ENCODE measurements at regions of chr6 and their contacts with region 1.

Region 1: GRCh38 chr6:15691250-15691869 is 28.5 kb upstream of the DTNBP1 start:
- DNase-seq: peak; percentile 90
- H3K4me3 ChIP-seq: peak overlapping the region in 1 of 2 experiments; percentile 22; a peak in 1 of 4 replicates
- H3K27ac ChIP-seq: no peak overlapping the region
- H3K4me1 ChIP-seq: no peaks in the 10 kb centered on the region; a peak in 1 of 4 replicates
- H3K27me3 ChIP-seq: no peaks in the 10 kb centered on the region
- CTCF ChIP-seq: peak; percentile 99
- EP300 ChIP-seq: peak in 1 of 2 experiments; percentile 21; a peak in 1 of 4 replicates
- RAD21 ChIP-seq: peak; percentile 100

Region 2: DNA sequence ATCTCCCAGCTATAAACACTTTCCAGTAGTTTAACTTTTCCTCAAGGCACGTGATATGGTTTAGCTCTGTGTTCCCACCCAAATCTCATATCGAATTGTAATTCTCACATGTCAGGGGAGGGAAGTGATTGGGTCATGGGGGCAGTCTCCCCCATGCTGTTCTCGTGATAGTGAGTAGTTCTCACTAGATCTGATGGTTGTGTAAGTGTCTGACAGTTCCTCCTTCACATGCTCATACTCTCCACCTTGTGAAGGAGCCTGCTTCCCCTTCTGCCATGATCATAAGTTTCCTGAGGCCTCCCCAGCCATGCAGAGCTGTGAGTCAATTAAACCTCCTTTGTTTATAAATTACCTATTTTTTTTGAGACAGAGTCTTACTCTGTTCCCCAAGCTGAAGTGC is 156.4 kb before region 1 on chr6:
- CTCF ChIA-PET with region 1: no interaction called
- POLR2A ChIA-PET with region 1: no interaction called
- DNase-seq: no peak
- H3K4me3 ChIP-seq: no peak overlapping the region
- H3K27ac ChIP-seq: no peak overlapping the region
- H3K4me1 ChIP-seq: no peaks in the 10 kb centered on the region; a peak in 1 of 4 replicates
- H3K27me3 ChIP-seq: no peaks in the 10 kb centered on the region
- CTCF ChIP-seq: no peak
- EP300 ChIP-seq: no peak
- RAD21 ChIP-seq: no peak

Region 3: DNA sequence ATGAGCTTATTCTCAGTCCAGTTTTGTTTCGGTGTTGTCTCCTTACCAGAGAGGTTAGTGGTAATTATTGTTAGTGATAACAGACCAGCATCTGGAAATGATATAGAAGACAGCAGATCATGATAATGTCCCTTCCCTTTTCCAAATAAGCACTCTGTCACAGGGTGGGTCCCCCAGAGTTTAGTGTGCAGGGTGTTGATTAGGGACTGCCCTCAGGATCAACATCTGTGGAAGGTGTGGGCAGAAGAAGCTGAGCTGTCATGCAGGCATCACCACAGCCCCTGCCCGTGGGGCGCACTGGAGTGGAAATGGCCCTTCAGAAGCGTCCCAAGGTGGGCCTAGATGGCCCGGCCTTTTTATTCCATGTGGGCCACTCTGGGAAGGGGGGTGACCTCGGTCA is 39.1 kb after region 1 on chr6:
- CTCF ChIA-PET with region 1: interaction called, 11 read pairs
- POLR2A ChIA-PET with region 1: no interaction called
- DNase-seq: peak; percentile 57
- H3K4me3 ChIP-seq: no peak overlapping the region; a peak in 1 of 4 replicates
- H3K27ac ChIP-seq: peak overlapping the region in 1 of 2 experiments; percentile 44; a peak in 2 of 4 replicates
- H3K4me1 ChIP-seq: peaks cover 0 to 13% of the 10 kb centered on the region in 2 experiments; a peak in 2 of 4 replicates
- H3K27me3 ChIP-seq: no peaks in the 10 kb centered on the region
- CTCF ChIP-seq: no peak
- EP300 ChIP-seq: peak in 1 of 2 experiments; percentile 79; a peak in 1 of 4 replicates
- RAD21 ChIP-seq: no peak

Region 4: GRCh38 chr6:15879382-15880261 is 188.3 kb after region 1 on chr6:
- CTCF ChIA-PET with region 1: interaction called, 12 read pairs
- POLR2A ChIA-PET with region 1: no interaction called
- DNase-seq: peak; percentile 76
- H3K4me3 ChIP-seq: no peak overlapping the region
- H3K27ac ChIP-seq: peak overlapping the region in 1 of 2 experiments; percentile 84; a peak in 2 of 4 replicates
- H3K4me1 ChIP-seq: peaks cover 4 to 33% of the 10 kb centered on the region in 2 experiments; a peak in 3 of 4 replicates
- H3K27me3 ChIP-seq: no peaks in the 10 kb centered on the region
- CTCF ChIP-seq: no peak
- EP300 ChIP-seq: peak in 1 of 2 experiments; percentile 96; a peak in 2 of 4 replicates
- RAD21 ChIP-seq: peak; percentile 28; the same call in 1 of the 2 replicates

Region 5: DNA sequence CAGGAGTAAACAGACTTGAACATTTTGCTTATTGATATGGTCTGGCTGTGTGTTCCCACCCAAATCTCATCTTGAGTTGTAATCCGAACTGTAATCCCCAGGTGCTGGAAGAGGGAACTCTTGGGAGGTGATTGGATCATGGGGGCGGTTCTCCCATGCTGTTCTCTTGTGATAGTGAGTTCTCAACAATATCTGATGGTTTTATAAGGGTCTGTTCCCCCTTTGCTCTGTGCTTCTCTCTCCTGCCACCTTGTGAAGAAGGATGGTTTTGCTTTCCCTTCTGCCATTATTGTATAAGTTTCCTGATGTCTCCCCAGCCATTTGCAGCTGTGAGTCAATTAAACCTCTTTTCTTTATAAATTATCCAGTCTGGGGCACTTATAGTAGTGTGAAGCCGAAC is 477.5 kb after region 1 on chr6:
- CTCF ChIA-PET with region 1: interaction called, 20 read pairs
- POLR2A ChIA-PET with region 1: no interaction called
- DNase-seq: no peak
- H3K4me3 ChIP-seq: no peak overlapping the region; a peak in 1 of 4 replicates
- H3K27ac ChIP-seq: no peak overlapping the region
- H3K4me1 ChIP-seq: no peaks in the 10 kb centered on the region; a peak in 1 of 4 replicates
- H3K27me3 ChIP-seq: no peaks in the 10 kb centered on the region
- CTCF ChIP-seq: peak; percentile 57
- EP300 ChIP-seq: no peak
- RAD21 ChIP-seq: peak; percentile 86

Region 6: DNA sequence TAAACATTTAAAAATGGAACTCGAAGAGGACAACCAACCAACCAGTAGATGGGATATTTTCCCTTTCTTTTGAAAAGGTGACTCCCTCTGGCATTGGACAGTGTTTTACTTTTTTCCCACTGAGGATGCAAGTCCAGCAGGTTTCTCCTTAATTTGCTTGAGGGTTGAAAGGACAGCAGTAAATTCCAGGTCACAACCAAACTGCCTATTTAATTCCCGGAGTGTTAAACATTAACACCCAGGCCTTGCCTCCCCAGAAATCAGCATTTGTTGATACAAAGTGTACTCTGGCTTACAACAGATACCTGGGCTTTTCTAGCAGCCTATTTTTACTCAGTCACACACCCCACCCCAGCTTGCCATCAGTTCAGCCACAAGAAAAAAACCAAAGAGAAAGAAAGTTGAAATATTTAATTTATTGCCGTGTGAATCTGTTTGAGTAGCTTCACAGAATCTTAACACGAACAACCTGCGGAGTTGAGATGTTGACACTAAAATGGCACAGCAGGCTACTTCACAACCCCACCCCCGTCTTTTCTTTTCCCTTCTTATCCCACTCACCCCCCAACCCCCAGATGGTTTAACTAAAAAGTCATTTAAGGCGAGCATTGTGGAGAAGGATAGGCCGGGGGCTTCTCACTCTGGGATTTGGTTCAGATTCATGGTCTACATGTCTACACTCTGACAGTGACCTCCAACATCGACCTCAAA is 483.2 kb after region 1 on chr6:
- CTCF ChIA-PET with region 1: interaction called, 85 read pairs
- POLR2A ChIA-PET with region 1: no interaction called
- DNase-seq: no peak
- H3K4me3 ChIP-seq: no peak overlapping the region
- H3K27ac ChIP-seq: no peak overlapping the region
- H3K4me1 ChIP-seq: no peaks in the 10 kb centered on the region
- H3K27me3 ChIP-seq: 0 out of 2 replicates have a peak, but pooled peaks cover 5% of the 10 kb centered on the region
- CTCF ChIP-seq: no peak
- EP300 ChIP-seq: no peak
- RAD21 ChIP-seq: no peak

Region 7: DNA sequence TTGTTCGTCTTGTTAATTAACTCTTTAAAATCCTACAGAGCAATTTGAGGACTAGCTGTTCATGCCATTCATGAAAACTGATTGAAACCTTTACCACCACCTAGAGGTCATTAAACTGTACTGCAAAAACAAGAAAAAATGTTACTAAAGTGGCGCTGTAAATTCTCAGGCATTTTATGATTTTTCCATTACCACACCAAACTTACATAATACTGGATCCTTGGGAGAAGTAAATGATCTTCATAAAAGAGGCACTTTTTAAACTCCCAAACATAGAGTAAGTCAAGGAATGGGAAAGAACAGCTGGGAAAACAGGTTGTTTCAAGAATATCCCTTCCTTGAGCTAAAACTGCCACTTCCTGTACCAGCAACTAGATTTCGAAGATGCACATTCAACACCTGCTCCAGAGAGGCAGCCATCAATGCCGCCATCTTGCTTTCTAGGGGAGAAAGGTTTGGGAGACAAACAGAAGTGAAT is 491.9 kb after region 1 on chr6:
- CTCF ChIA-PET with region 1: interaction called, 85 read pairs
- POLR2A ChIA-PET with region 1: no interaction called
- DNase-seq: peak; percentile 60
- H3K4me3 ChIP-seq: no peak overlapping the region
- H3K27ac ChIP-seq: no peak overlapping the region
- H3K4me1 ChIP-seq: no peaks in the 10 kb centered on the region; a peak in 1 of 4 replicates
- H3K27me3 ChIP-seq: no peaks in the 10 kb centered on the region; the same call in 1 of the 2 replicates
- CTCF ChIP-seq: peak; percentile 75
- EP300 ChIP-seq: no peak
- RAD21 ChIP-seq: peak; percentile 84

Region 8: GRCh38 chr6:16206595-16207037 is 515.3 kb after region 1 on chr6:
- CTCF ChIA-PET with region 1: interaction called, 24 read pairs
- POLR2A ChIA-PET with region 1: no interaction called
- DNase-seq: peak; percentile 80
- H3K4me3 ChIP-seq: peak overlapping the region in 1 of 2 experiments; percentile 33; a peak in 1 of 4 replicates
- H3K27ac ChIP-seq: peak overlapping the region; percentile 36 to 47; a peak in 3 of 4 replicates
- H3K4me1 ChIP-seq: peaks cover 4 to 11% of the 10 kb centered on the region in 2 experiments; a peak in 3 of 4 replicates
- H3K27me3 ChIP-seq: no peaks in the 10 kb centered on the region
- CTCF ChIP-seq: peak; percentile 97
- EP300 ChIP-seq: no peak
- RAD21 ChIP-seq: peak; percentile 98

Measured in SK-N-SH (cell line).